ENCODE measurements at regions of chr15 and their contacts with region 1.

Region 1: DNA sequence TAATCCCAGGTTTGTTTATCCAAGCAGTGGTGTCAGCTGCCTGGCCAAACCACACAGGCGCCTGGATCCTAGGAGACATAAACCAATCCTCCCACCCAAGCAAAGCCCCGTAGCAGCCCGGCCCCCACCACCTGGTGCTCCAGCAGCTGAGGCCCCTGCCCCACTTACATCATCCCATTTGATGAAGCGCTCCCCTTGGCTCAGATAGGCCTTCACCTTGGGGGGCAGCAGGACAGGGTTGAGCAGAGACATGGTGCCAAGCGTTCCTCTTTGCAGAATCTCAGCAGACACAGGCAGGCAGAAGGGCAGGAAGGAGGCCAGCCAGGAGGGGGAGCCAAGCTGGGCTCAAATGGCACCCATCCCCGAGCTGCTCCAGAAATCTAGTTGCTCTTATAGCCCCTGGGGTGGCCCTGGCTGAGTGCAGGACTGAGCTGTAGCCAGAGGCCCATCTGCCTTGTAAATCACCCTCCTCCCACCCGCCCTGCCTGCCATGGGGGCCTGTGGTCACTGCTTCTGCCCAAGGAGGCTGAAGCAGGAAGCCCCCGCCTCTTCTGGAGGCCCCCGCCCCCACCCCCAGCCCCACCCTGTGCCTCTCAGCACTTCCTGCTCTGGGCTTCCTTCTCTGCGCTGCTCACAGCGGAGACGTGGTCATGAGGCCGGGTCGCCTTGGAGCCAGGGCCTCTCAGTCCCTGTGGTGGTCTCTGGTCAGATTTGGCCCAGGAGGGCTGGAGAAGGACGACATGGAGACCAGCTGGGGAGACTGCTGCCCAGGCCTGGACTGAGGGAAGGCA is at the start of gene PLCB2:
- DNase-seq: peak; percentile 49 to 87 (median 68)
- ATAC-seq: peak; percentile 82
- H3K4me3 ChIP-seq: peak within 1 kb of the TSS; percentile 98
- H3K4me3 Mint-ChIP-seq: peak within 1 kb of the TSS; percentile 96
- H3K27ac ChIP-seq: peak within 1 kb of the TSS; percentile 74 to 79
- H3K27ac Mint-ChIP-seq: peak within 1 kb of the TSS; percentile 95
- H3K4me1 ChIP-seq: peaks cover 49% of the 10 kb centered on the region
- H3K4me1 Mint-ChIP-seq: peaks cover 52% of the 10 kb centered on the region
- H3K27me3 ChIP-seq: no peaks in the 10 kb centered on the region
- H3K27me3 Mint-ChIP-seq: no peaks in the 10 kb centered on the region
- CTCF ChIP-seq: peak; percentile 44
- total RNA-seq, gene PLCB2: 206 to 222 TPM

Region 2: GRCh38 chr15:40282144-40282868 is 25.3 kb before region 1 on chr15:
- CTCF ChIA-PET with region 1: interaction called, 45 read pairs
- POLR2A ChIA-PET with region 1: interaction called, 34 read pairs
- intact Hi-C with region 1: loop called (anchors 1 kb)
- DNase-seq: peak; percentile 18 to 75 (median 48)
- ATAC-seq: peak; percentile 72
- H3K4me3 ChIP-seq: peak overlapping the region; percentile 50
- H3K4me3 Mint-ChIP-seq: peak overlapping the region; percentile 69
- H3K27ac ChIP-seq: no peak overlapping the region
- H3K27ac Mint-ChIP-seq: no peak overlapping the region
- H3K4me1 ChIP-seq: peaks cover 23% of the 10 kb centered on the region
- H3K4me1 Mint-ChIP-seq: peaks cover 4% of the 10 kb centered on the region
- H3K27me3 ChIP-seq: peaks cover 31 to 44% of the 10 kb centered on the region in 2 experiments
- H3K27me3 Mint-ChIP-seq: peaks cover 32% of the 10 kb centered on the region
- CTCF ChIP-seq: peak; percentile 69

Region 3: DNA sequence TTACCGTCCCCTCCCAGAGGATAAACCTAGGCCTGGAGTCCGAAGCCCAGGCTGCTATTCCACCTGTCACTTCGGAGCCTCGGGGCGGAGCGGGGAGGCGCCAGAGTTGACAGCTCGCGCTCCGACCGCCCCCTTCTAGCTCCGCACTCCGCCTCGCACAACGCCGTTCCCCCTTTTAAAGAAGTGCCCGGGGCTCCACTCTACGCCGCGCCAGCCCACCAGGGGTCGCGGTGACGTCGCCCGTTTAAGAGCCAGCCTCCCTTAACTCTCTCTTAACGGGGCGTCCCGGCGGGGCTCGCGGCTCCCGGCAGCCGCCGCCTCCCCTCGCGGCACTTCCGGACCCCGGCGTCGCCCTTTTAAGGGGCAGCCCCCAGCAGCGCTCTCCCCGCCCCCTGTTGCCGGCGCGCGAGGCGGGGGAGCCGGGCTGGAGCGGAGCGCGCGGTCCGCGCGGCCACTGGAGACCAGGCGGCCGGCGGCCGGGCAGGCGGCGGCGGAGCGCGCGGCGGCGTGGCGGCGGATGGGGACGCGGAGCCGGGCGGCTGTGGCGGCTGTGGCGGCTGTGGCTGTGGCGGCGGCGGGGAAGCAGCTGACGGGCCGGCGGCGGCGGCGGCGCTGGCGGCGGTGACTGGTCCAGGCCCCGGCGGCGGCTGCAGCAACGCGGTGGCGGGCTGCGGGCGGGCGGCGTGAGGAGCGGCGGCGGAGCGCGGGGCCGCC is 15.8 kb after region 1 on chr15 and contains the start of gene INAFM2:
- CTCF ChIA-PET with region 1: interaction called, 55 read pairs
- POLR2A ChIA-PET with region 1: interaction called, 65 read pairs
- intact Hi-C with region 1: loop called in 1 of 2 experiments (anchors 2 kb)
- DNase-seq: peak; percentile 75 to 96 (median 87)
- ATAC-seq: peak; percentile 84
- H3K4me3 ChIP-seq: peak within 1 kb of the TSS; percentile 55
- H3K4me3 Mint-ChIP-seq: peak within 1 kb of the TSS; percentile 92
- H3K27ac ChIP-seq: peak within 1 kb of the TSS; percentile 10 to 41
- H3K27ac Mint-ChIP-seq: peak within 1 kb of the TSS; percentile 79
- H3K4me1 ChIP-seq: peaks cover 32% of the 10 kb centered on the region
- H3K4me1 Mint-ChIP-seq: peaks cover 36% of the 10 kb centered on the region
- H3K27me3 ChIP-seq: no peaks in the 10 kb centered on the region
- H3K27me3 Mint-ChIP-seq: no peaks in the 10 kb centered on the region
- CTCF ChIP-seq: peak; percentile 59
- total RNA-seq, gene INAFM2: 6.8 to 7.0 TPM